ENCODE measurements at regions of chr16 and their contacts with region 1.

Region 1: DNA sequence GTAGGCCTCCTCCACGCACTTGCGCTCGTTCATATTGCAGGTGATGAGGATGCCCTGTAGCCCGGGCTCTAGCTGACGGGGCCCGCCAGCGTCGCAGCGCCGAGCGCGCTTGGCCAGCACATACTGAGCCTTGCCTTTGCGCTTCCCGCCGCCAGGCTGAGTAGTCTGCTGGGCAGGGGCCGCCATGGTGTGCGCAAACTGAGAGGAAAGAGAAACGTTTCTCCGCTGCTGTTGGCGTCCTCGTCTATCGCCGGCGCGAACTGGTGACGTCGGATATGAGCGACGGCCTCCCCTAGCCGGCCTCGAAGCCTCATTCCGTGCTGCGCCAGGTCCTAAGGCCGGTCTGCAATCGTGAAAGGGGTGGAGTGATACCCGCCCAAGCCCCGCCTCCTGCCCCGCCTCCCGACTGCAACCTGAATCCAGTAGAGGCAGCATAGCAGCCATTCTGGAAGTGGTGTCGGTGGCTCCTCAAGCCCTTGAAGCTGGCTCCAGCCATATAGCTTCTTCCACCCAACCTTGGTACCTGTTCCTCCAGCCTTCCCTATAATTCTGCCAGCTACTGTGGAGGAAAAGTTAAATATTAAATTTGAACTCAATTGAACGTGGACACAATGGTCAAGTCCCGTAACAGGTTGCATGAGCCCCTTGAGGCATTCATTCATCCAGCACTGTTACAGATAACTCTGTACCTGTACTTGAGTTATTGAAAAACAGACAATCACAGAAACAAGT is at the start of gene THUMPD1:
- DNase-seq: peak; percentile 91 to 98 (median 96)
- H3K4me3 ChIP-seq: peak within 1 kb of the TSS; percentile 76 to 90
- H3K4me3 Mint-ChIP-seq: peak within 1 kb of the TSS; percentile 95 to 98 (median 96)
- H3K27ac ChIP-seq: peak within 1 kb of the TSS; percentile 98
- H3K27ac Mint-ChIP-seq: peak within 1 kb of the TSS; percentile 98 to 99 (median 99)
- H3K4me1 ChIP-seq: peaks cover 34% of the 10 kb centered on the region
- H3K4me1 Mint-ChIP-seq: peaks cover 15 to 33% (median 23%) of the 10 kb centered on the region in 4 donors
- H3K27me3 ChIP-seq: no peaks in the 10 kb centered on the region
- H3K27me3 Mint-ChIP-seq: no peaks in the 10 kb centered on the region
- total RNA-seq, gene THUMPD1: 73.2 to 74.4 TPM

Region 2: DNA sequence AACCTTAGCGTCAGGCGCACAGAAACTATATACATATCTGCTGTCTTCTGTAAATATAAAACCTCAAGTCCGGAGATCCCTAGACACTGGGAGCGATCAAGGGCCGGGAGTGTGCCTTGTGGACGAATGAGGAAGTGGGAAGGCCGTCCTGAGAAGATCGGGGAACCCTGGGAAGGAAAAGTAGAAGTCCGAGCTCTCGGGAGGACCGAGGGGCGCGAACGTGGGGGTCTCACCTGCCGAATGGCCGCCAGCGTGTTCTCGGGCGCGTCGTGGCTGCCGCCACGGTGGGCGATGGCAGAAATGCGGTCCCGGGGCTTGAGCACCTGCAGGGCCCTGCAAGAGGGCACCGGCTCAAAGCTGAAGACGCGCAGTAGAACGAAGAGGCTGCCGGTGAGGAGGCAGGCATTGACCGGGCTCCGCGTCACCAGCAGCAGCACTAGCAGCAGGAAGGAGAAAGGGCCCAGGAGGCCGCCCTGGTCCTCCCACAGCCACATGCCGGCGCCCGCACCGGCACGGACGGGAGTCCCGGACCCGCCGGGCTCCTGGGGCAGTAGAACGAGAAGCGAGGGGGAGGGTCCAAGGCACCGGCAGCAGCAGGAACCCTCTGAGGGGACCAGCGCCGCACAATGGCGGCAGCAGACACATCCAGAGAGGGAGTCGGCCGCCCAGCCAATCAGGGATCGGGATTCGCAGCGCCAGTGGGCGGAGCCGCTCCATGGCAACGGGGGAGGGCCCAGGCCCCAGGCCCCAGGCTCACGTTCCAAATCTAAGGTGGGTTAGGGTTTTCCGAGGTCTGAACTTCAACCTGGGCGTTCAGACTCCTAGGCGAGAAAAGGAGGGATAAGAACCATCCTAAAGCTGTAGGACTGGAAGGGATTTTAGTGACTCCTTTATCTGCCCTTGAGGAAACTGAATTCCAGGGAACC is 1220.0 kb before region 1 on chr16 and contains the start of gene GDE1:
- CTCF ChIA-PET with region 1: no interaction called
- POLR2A ChIA-PET with region 1: no interaction called
- intact Hi-C with region 1: loop called (anchors 2 kb)
- DNase-seq: peak; percentile 88 to 93 (median 89)
- H3K4me3 ChIP-seq: peak within 1 kb of the TSS; percentile 87 to 89
- H3K4me3 Mint-ChIP-seq: peak within 1 kb of the TSS; percentile 95 to 99 (median 96)
- H3K27ac ChIP-seq: peak within 1 kb of the TSS; percentile 78
- H3K27ac Mint-ChIP-seq: peak within 1 kb of the TSS; percentile 73 to 98 (median 95)
- H3K4me1 ChIP-seq: peaks cover 70% of the 10 kb centered on the region
- H3K4me1 Mint-ChIP-seq: peaks cover 45 to 74% (median 55%) of the 10 kb centered on the region in 4 donors
- H3K27me3 ChIP-seq: no peaks in the 10 kb centered on the region
- H3K27me3 Mint-ChIP-seq: no peaks in the 10 kb centered on the region
- total RNA-seq, gene GDE1: 23.2 to 23.3 TPM

Region 3: DNA sequence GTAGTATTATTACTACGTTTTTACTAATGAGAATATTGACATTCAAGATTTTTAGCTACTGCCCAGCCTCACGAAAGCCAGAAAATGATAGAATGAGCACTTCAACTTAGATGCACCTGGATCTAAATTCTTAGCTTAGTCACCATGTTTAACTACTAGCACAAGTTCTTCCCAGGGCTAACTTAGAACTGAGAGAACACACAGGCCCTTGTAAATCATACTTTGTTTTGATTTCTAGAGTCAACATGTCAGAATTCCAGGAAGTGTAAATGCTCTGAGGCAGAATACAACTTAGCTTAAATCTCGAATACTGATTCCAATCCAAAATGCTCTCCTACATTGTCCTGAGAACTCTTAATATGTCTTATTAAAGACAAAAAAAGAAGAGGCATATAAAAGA is 37.4 kb before region 1 on chr16:
- CTCF ChIA-PET with region 1: no interaction called
- POLR2A ChIA-PET with region 1: no interaction called
- intact Hi-C with region 1: no loop called
- DNase-seq: no peak
- H3K4me3 ChIP-seq: no peak overlapping the region
- H3K4me3 Mint-ChIP-seq: no peak overlapping the region
- H3K27ac ChIP-seq: no peak overlapping the region
- H3K27ac Mint-ChIP-seq: no peak overlapping the region
- H3K4me1 ChIP-seq: no peaks in the 10 kb centered on the region
- H3K4me1 Mint-ChIP-seq: no peaks in the 10 kb centered on the region
- H3K27me3 ChIP-seq: no peaks in the 10 kb centered on the region
- H3K27me3 Mint-ChIP-seq: no peaks in the 10 kb centered on the region

Region 4: DNA sequence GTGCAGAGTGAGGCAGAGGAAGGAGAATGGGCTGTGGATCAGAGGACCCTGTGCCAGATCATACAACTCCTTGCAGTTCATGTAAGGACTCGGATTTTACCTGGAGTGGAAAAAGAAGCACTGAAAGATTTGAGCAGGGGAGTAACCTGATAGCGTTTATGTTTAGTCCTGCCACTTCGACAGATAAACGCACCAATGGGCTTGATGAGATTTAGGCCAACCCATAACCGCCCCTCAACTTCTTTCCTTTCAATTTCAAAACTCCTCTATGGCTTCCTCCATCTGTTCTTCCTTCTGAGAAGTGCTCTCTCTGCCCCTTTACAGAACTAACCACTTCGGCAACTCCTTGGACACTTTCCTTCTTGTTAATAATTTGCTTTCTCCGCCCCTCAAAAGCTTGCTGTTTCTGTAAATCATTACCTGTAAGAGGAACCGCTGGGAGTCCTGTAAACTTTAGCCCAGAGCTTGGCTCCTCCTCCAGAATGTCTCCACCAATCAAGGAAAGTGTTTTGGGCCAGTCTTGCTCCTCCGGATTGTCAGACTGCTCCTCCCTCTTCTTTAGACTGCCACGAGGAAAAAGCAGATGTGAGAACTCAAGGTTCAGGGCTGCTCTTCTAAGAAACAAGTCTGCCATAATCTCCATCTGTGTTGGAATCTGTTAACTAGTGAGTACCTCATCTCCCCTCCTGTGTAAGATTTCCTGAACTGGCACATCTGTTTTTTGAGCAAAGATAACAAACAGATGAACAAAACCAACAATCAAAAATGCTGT is 21.9 kb after region 1 on chr16 and contains the start of gene ACSM3:
- CTCF ChIA-PET with region 1: interaction called, 5 read pairs
- POLR2A ChIA-PET with region 1: interaction called, 32 read pairs
- intact Hi-C with region 1: loop called (anchors 1 kb)
- DNase-seq: peak; percentile 76 to 84 (median 80)
- H3K4me3 ChIP-seq: peak within 1 kb of the TSS; percentile 49
- H3K4me3 Mint-ChIP-seq: peak within 1 kb of the TSS; percentile 88 to 97 (median 94)
- H3K27ac ChIP-seq: peak within 1 kb of the TSS; percentile 64
- H3K27ac Mint-ChIP-seq: peak within 1 kb of the TSS; percentile 80 to 99 (median 97)
- H3K4me1 ChIP-seq: peaks cover 20% of the 10 kb centered on the region
- H3K4me1 Mint-ChIP-seq: peaks cover 12 to 34% (median 24%) of the 10 kb centered on the region in 4 donors
- H3K27me3 ChIP-seq: no peaks in the 10 kb centered on the region
- H3K27me3 Mint-ChIP-seq: no peaks in the 10 kb centered on the region
- total RNA-seq, gene ACSM3: 3.3 to 6.7 TPM

Region 5: DNA sequence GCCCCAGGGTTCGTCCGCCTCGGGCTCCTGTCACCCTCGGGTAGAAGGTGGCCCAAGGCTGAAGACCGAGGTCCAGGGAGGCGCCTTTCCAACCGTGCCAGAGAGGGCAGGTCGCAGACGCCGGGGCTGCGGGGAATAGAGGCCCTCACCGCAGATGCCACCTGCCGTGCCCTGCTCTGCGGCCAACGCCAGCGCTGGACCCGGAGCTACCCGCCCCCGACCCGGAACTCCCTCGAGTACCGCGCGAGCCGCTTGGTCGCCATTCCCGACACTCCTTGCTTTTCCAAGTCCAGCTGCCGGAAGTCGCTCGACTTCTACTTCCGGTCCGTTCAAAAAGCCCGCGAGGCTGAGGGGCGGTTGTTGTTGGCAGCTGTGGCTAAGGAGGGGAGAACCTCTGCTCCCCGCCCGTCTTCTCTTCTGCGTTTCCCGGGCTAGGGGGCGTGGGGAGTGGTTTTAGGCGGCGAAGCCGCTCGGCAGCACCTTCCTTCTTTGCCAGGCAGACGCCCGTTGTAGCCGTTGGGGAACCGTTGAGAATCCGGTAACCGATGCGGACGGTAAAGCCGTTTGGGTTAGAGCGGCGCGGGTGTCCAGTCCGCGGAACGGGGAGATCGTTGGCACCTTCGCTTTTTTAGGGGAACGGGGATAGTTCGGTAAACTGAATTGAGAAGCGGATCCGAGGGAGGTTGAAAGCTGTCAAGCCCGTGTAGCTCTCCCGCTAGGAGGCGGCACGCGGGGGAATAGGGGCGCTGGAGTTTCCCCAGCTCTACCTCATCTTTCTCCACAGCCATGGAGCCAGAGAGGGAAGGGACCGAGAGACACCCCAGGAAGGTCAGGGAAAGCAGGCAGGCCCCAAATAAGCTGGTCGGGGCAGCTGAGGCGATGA is 64.7 kb after region 1 on chr16 and contains the starts of genes ERI2 and REXO5:
- CTCF ChIA-PET with region 1: interaction called, 3 read pairs
- POLR2A ChIA-PET with region 1: interaction called, 16 read pairs
- intact Hi-C with region 1: loop called (anchors 1 kb)
- DNase-seq: peak; percentile 67 to 84 (median 70)
- H3K4me3 ChIP-seq: peak within 1 kb of the TSS; percentile 73 to 80
- H3K4me3 Mint-ChIP-seq: peak within 1 kb of the TSS; percentile 96 to 100 (median 99)
- H3K27ac ChIP-seq: peak within 1 kb of the TSS; percentile 81
- H3K27ac Mint-ChIP-seq: peak within 1 kb of the TSS; percentile 93 to 98 (median 95)
- H3K4me1 ChIP-seq: peaks cover 10% of the 10 kb centered on the region
- H3K4me1 Mint-ChIP-seq: peaks cover 3 to 27% (median 16%) of the 10 kb centered on the region in 4 donors
- H3K27me3 ChIP-seq: no peaks in the 10 kb centered on the region
- H3K27me3 Mint-ChIP-seq: no peaks in the 10 kb centered on the region
- total RNA-seq, gene ERI2: 3.7 to 4.0 TPM
- total RNA-seq, gene REXO5: 0.53 to 1.1 TPM